Left ventricle myocardium inferior (tissue), 1 donor: ENCODE measurements at regions of chr11 and their contacts with region 1.

Region 1: DNA sequence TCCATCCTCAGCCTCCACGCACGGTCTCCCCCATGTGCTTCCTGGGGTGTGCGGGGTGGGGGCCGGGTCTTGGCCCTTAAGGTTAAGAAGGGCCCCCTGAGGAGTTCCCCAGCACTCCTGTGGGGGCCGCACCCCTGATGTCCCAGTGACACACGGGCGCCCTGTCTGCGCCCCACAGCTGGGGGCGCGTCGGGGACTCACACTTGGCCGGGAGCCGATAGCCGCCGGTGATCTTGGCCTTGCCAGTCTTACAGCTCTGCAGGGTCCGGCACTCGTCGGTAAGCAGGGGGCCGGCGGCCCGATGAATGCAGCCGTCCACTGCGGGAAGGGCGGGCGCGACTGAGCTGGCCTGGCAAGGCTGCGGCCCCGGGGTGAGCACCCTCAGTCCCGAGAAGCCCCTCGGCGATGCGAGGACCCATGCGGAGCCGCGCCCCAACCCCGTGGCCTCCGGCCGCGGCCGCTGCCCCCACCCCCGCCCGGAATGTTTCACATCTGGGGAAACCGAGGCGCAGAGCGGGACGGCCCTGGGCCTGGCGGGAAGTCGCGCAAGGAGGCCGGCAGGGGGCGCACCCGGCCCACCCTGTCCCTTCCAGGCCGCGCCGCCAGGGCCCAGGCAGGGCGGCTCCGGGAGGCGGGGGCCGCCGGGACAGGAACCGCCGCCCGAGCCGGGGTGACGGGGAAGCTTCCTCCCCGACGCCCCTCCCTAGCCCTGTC is 13.9 kb downstream of the OTUB1 start:
- DNase-seq: peak; percentile 73
- H3K4me3 ChIP-seq: peak overlapping the region; percentile 59
- H3K27ac ChIP-seq: no peak overlapping the region
- H3K4me1 ChIP-seq: peaks cover 52% of the 10 kb centered on the region
- H3K27me3 ChIP-seq: no peaks in the 10 kb centered on the region
- CTCF ChIP-seq: peak; percentile 80

Region 2: DNA sequence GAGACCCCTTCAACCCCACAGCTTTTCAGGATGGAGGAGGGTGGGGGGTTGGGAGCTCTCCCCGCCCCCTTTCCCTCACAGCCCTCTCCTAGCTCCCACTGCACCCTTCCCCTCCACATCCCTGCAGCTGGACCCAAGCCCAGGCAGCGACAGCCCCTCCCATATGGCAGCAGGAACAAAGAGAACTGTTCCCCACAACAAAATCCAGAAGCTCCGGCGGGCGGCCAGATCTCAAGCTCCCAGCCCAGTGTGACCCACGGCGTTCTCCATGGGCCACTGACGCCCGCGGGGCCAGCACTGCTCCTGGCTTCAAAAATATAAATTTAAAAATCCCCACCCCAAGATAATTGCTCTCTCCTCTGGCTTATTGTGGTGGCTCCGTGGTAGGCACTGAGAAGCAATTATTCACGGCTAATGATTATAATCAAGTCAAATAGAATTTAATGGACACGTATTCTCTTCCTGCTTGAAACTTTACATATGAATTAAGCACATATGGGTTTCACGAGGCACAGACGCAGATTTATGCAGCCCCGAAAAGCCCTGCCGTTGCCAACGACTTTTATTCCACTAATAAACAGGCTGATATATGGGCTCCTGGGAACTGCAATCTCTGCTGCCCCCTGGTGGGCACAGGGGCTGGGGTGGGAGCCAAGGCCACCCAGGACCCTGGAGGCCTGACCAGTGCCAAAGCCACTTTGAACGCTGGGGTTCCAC is 148.2 kb after region 1 on chr11:
- intact Hi-C with region 1: loop called (anchors 5 kb)
- DNase-seq: peak; percentile 88
- H3K4me3 ChIP-seq: peak overlapping the region; percentile 56
- H3K27ac ChIP-seq: peak overlapping the region; percentile 88
- H3K4me1 ChIP-seq: peaks cover 65% of the 10 kb centered on the region
- H3K27me3 ChIP-seq: no peaks in the 10 kb centered on the region
- CTCF ChIP-seq: peak; percentile 97